ENCODE measurements at regions of chr11 and their contacts with region 1.

Region 1: GRCh38 chr11:43830928-43831440 is 49.6 kb upstream of the ALKBH3 start:
- DNase-seq: peak; percentile 70
- H3K4me3 Mint-ChIP-seq: peak overlapping the region; percentile 12
- H3K27ac Mint-ChIP-seq: peak overlapping the region; percentile 76
- H3K4me1 Mint-ChIP-seq: peaks cover 11% of the 10 kb centered on the region
- H3K27me3 Mint-ChIP-seq: no peaks in the 10 kb centered on the region

Region 2: GRCh38 chr11:43643898-43644620 is 186.9 kb before region 1 on chr11:
- intact Hi-C with region 1: loop called (anchors 5 kb)
- DNase-seq: peak; percentile 96
- H3K4me3 Mint-ChIP-seq: peak overlapping the region; percentile 94
- H3K27ac Mint-ChIP-seq: peak overlapping the region; percentile 87
- H3K4me1 Mint-ChIP-seq: peaks cover 11% of the 10 kb centered on the region
- H3K27me3 Mint-ChIP-seq: peaks cover 15% of the 10 kb centered on the region

Region 3: GRCh38 chr11:43868852-43869567 is 38.0 kb after region 1 on chr11:
- intact Hi-C with region 1: loop called (anchors 1 kb)
- DNase-seq: peak; percentile 89
- H3K4me3 Mint-ChIP-seq: peak overlapping the region; percentile 66
- H3K27ac Mint-ChIP-seq: peak overlapping the region; percentile 76
- H3K4me1 Mint-ChIP-seq: peaks cover 28% of the 10 kb centered on the region
- H3K27me3 Mint-ChIP-seq: peaks cover 60% of the 10 kb centered on the region

Region 4: GRCh38 chr11:43880640-43881159 is 49.7 kb after region 1 on chr11 and contains the start of gene ALKBH3:
- intact Hi-C with region 1: loop called (anchors 1 kb)
- DNase-seq: peak; percentile 97
- H3K4me3 Mint-ChIP-seq: peak within 1 kb of the TSS; percentile 93
- H3K27ac Mint-ChIP-seq: peak within 1 kb of the TSS; percentile 90
- H3K4me1 Mint-ChIP-seq: peaks cover 14% of the 10 kb centered on the region
- H3K27me3 Mint-ChIP-seq: peaks cover 12% of the 10 kb centered on the region
- total RNA-seq, gene ALKBH3: 38.3 and 41.4 TPM in 2 replicates

Region 5: GRCh38 chr11:43920598-43921419 is 89.8 kb after region 1 on chr11:
- intact Hi-C with region 1: loop called (anchors 1 kb)
- DNase-seq: peak; percentile 61
- H3K4me3 Mint-ChIP-seq: no peak overlapping the region
- H3K27ac Mint-ChIP-seq: peak overlapping the region; percentile 34
- H3K4me1 Mint-ChIP-seq: peaks cover 12% of the 10 kb centered on the region
- H3K27me3 Mint-ChIP-seq: no peaks in the 10 kb centered on the region

Region 6: GRCh38 chr11:43944761-43945311 is 113.9 kb after region 1 on chr11:
- intact Hi-C with region 1: loop called (anchors 5 kb)
- DNase-seq: peak; percentile 93
- H3K4me3 Mint-ChIP-seq: peak overlapping the region; percentile 87
- H3K27ac Mint-ChIP-seq: peak overlapping the region; percentile 28
- H3K4me1 Mint-ChIP-seq: peaks cover 18% of the 10 kb centered on the region
- H3K27me3 Mint-ChIP-seq: peaks cover 62% of the 10 kb centered on the region